PC-3 (cell line): ENCODE measurements at regions of chr11 and their contacts with region 1.

Region 1: GRCh38 chr11:75547580-75548058 is 14.4 kb upstream of the SERPINH1 start:
- DNase-seq: peak; percentile 82
- ATAC-seq: peak; percentile 95
- H3K4me3 ChIP-seq: no peak overlapping the region
- H3K27ac ChIP-seq: no peak overlapping the region
- H3K4me1 ChIP-seq: no peaks in the 10 kb centered on the region
- H3K27me3 ChIP-seq: no peaks in the 10 kb centered on the region
- CTCF ChIP-seq: peak; percentile 97

Region 2: DNA sequence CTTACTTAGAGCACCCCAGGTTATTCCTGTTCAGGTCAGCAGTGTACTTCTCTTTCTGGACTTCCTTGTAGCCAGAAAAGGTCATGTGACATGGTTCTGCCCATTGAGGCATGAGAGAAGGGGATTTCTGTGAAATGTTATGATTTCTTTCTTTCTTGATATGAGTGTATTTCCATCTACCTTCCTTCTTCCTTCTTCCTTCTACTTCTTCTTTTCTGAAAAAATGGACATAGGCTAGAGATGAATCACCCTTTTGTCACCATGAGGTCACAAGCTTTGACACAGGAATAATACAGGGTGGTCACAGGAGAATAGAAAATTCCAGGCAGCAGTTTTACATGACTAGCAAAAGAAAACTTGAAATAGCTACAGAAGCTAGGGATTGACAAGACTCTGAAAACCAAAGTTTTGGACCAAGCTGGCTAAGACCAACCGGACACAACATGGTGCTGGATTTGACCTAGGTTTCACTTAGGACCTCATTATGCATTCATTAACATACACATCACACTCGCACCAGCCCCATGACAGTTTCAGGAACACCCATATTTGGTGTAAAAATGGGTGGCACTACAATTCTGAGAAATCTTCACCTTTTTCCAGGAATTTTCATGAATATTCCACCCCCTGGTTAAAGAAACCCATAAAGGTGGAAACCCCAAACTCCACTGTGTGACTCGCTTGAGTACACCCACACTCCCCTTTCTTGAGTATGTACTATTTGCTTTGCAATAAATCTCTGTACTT is 142.4 kb after region 1 on chr11:
- CTCF ChIA-PET with region 1: no interaction called
- POLR2A ChIA-PET with region 1: no interaction called
- intact Hi-C with region 1: loop called (anchors 10 kb)
- DNase-seq: peak; percentile 55
- ATAC-seq: peak; percentile 80
- H3K4me3 ChIP-seq: no peak overlapping the region
- H3K27ac ChIP-seq: no peak overlapping the region
- H3K4me1 ChIP-seq: peaks cover 16% of the 10 kb centered on the region
- H3K27me3 ChIP-seq: no peaks in the 10 kb centered on the region; the same call in 1 of the 2 replicates
- CTCF ChIP-seq: no peak

Region 3: DNA sequence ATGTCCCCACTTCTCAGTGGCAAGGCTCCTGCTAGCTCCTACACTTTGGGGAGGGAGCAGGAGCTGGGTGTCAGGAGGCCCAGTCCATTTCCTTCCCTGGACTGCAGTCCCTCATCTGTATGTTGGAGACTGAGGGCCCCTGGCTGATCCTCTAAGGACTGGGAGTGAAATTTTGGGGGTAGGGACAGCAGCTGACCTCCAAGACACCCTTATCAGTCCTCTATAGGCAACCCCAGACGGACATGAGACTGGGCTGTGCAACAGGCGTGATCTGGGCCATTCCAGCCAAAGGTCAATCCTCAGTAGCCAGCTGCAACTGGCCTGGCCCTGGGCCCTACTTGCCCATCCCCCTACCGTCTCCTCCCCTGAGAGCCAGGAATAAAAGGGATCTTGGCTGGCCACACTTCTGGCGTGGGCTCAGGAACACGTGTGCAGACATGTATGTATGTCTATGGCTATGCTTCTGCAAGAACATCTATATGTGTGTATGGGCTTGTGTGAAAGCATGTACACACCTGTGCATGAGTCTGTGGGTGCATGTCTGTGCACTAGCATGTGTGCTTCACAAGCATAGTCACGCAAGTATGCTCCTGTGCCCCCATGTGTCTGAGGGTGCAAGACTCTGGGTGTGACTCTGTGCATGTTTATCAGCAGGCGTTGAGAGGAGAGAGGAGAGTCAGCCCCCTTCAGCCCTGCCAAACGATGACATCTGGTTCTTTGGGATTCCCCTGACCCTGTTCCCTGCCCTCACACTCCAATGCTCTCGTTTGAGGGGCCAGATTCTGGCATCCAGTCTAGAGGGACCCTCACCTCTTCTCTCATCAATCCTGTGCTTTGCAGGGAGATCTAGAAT is 196.3 kb after region 1 on chr11:
- CTCF ChIA-PET with region 1: no interaction called
- POLR2A ChIA-PET with region 1: no interaction called
- intact Hi-C with region 1: no loop called
- DNase-seq: no peak
- ATAC-seq: no peak
- H3K4me3 ChIP-seq: no peak overlapping the region
- H3K27ac ChIP-seq: no peak overlapping the region
- H3K4me1 ChIP-seq: no peaks in the 10 kb centered on the region
- H3K27me3 ChIP-seq: peaks cover 24% of the 10 kb centered on the region
- CTCF ChIP-seq: no peak